Left ventricle myocardium superior (tissue), 1 donor: ENCODE measurements at regions of chr10 and their contacts with region 1.

Region 1: GRCh38 chr10:36765782-36766414 is 359.5 kb upstream of the ANKRD30A start:
- DNase-seq: no peak
- ATAC-seq: no peak

Region 2: GRCh38 chr10:35946556-35946955 is 819.3 kb before region 1 on chr10:
- intact Hi-C with region 1: loop called (anchors 5 kb)
- DNase-seq: no peak
- ATAC-seq: no peak